Heart right ventricle (tissue), 16 donors: ENCODE measurements at regions of chr10 and their contacts with region 1.

Region 1: DNA sequence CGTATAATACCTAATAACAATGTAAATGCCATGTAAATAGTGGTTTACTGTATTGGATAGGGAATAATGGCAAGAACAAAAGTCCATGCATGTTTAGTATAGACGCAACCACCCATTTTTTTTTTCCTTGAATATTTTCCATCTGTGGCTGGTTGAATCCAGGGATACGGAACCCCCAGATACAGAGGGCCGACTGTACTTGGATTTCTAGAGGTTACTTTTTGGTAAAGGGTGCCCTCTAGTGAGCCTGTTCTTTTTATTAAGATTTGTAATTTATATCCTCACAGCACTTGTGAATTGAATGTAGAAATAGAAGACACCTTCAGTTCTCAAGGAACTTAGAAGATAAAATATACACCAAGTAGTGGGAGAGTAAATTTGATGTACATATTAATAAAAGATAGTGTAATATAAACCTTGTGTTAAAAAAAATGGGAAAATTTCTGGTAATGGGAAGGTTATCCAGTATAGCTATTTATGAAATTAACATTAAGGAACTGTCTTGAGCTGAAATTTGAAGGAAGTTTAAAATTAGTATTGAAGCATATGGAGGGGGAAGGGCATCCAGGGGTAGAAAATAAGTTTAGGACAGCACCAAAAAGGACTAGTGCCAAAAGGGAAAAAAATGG is 32.0 kb downstream of the EXOC6 start:
- DNase-seq: peak in 1 of 2 donors; percentile 41
- ATAC-seq: peak in 7 of 8 donors; percentile 29 to 76 (median 67)
- H3K4me3 ChIP-seq: no peak overlapping the region
- H3K27ac ChIP-seq: no peak overlapping the region
- H3K4me1 ChIP-seq: peaks cover 0 to 28% (median 14%) of the 10 kb centered on the region in 9 donors
- H3K27me3 ChIP-seq: no peaks in the 10 kb centered on the region
- CTCF ChIP-seq: peak in 8 of 9 donors; percentile 31 to 75 (median 64)

Region 2: GRCh38 chr10:92592761-92593618 is 287.4 kb before region 1 on chr10 and contains the start of gene KIF11:
- intact Hi-C with region 1: loop called in 3 of 10 experiments (anchors 2 to 10 kb)
- DNase-seq: peak; percentile 97
- ATAC-seq: peak; percentile 95 to 97 (median 96)
- H3K4me3 ChIP-seq: peak within 1 kb of the TSS; percentile 54 to 99 (median 71)
- H3K27ac ChIP-seq: peak within 1 kb of the TSS; percentile 76 to 98 (median 94)
- H3K4me1 ChIP-seq: peaks cover 0 to 49% (median 16%) of the 10 kb centered on the region in 9 donors
- H3K27me3 ChIP-seq: no peaks in the 10 kb centered on the region
- CTCF ChIP-seq: peak in 1 of 9 donors; percentile 9
- total RNA-seq, gene KIF11: 0.30 to 4.4 (median 0.84) TPM

Region 3: GRCh38 chr10:92839191-92840085 is 40.9 kb before region 1 on chr10:
- intact Hi-C with region 1: loop called in 4 of 10 experiments (anchors 1 to 5 kb)
- DNase-seq: peak; percentile 71 to 74
- ATAC-seq: peak in 7 of 8 donors; percentile 32 to 80 (median 70)
- H3K4me3 ChIP-seq: no peak overlapping the region
- H3K27ac ChIP-seq: peak overlapping the region in 8 of 10 donors; percentile 26 to 85 (median 58)
- H3K4me1 ChIP-seq: peaks cover 0 to 44% (median 10%) of the 10 kb centered on the region in 9 donors
- H3K27me3 ChIP-seq: no peaks in the 10 kb centered on the region
- CTCF ChIP-seq: peak in 6 of 9 donors; percentile 11 to 55 (median 37)

Region 4: GRCh38 chr10:92857904-92858514 is 22.3 kb before region 1 on chr10:
- intact Hi-C with region 1: no loop called
- DNase-seq: no peak
- ATAC-seq: no peak
- H3K4me3 ChIP-seq: no peak overlapping the region
- H3K27ac ChIP-seq: no peak overlapping the region
- H3K4me1 ChIP-seq: no peaks in the 10 kb centered on the region
- H3K27me3 ChIP-seq: no peaks in the 10 kb centered on the region
- CTCF ChIP-seq: no peak

Region 5: DNA sequence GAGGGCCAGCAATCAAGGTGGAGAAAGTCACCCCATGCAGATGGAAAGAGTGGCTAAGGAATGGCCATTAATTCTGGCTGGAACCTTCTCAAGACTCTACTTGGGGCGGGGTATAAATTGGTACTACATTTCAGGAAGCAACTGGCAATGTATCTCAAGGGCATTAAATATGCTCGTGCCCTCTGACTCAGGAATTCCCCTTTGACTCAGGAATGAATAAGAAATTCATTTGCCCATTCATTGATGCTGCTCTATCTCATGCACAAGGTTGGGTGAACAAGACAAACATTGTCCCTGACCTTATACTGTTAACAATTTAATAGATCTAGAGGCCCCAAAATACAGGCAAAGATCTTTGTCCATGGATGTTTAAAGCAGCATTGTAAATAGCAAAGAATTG is 413.7 kb after region 1 on chr10:
- intact Hi-C with region 1: loop called in 1 of 10 experiments (anchors 10 kb)
- DNase-seq: no peak
- ATAC-seq: no peak
- H3K4me3 ChIP-seq: no peak overlapping the region
- H3K27ac ChIP-seq: no peak overlapping the region
- H3K4me1 ChIP-seq: no peaks in the 10 kb centered on the region
- H3K27me3 ChIP-seq: no peaks in the 10 kb centered on the region
- CTCF ChIP-seq: no peak

Region 6: DNA sequence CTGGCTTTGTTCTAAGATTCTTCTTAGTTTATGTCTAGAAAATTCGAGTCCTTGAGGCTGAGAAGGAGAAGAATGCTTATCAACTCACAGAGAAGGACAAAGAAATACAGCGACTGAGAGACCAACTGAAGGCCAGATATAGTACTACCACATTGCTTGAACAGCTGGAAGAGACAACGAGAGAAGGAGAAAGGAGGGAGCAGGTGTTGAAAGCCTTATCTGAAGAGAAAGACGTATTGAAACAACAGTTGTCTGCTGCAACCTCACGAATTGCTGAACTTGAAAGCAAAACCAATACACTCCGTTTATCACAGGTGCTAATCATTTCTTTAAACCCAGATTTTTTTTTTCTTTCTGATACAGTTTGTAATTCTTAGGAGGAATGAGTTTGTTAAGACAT is 622.7 kb after region 1 on chr10:
- intact Hi-C with region 1: loop called in 1 of 10 experiments (anchors 10 kb)
- DNase-seq: no peak
- ATAC-seq: no peak
- H3K4me3 ChIP-seq: no peak overlapping the region
- H3K27ac ChIP-seq: no peak overlapping the region
- H3K4me1 ChIP-seq: peaks cover 0 to 4% (median 0%) of the 10 kb centered on the region in 9 donors
- H3K27me3 ChIP-seq: no peaks in the 10 kb centered on the region
- CTCF ChIP-seq: no peak